ENCODE measurements at regions of chr11 and their contacts with region 1.

Region 1: GRCh38 chr11:122309262-122309925 is 193.4 kb upstream of the BLID start:
- DNase-seq: peak in 1 of 2 donors; percentile 45
- ATAC-seq: peak; percentile 63 to 97 (median 91)
- H3K4me3 ChIP-seq: peak overlapping the region in 9 of 10 donors; percentile 21 to 55 (median 47)
- H3K27ac ChIP-seq: peak overlapping the region in 9 of 10 donors; percentile 46 to 86 (median 73)
- H3K4me1 ChIP-seq: peaks cover 0 to 38% (median 7%) of the 10 kb centered on the region in 9 donors
- H3K27me3 ChIP-seq: no peaks in the 10 kb centered on the region
- CTCF ChIP-seq: no peak

Region 2: GRCh38 chr11:122242731-122243130 is 66.7 kb before region 1 on chr11:
- intact Hi-C with region 1: loop called in 1 of 10 experiments (anchors 10 kb)
- DNase-seq: peak in 1 of 2 donors; percentile 13
- ATAC-seq: peak in 1 of 8 donors; percentile 52
- H3K4me3 ChIP-seq: no peak overlapping the region
- H3K27ac ChIP-seq: no peak overlapping the region
- H3K4me1 ChIP-seq: peaks cover 0 to 8% (median 0%) of the 10 kb centered on the region in 9 donors
- H3K27me3 ChIP-seq: no peaks in the 10 kb centered on the region
- CTCF ChIP-seq: no peak

Region 3: DNA sequence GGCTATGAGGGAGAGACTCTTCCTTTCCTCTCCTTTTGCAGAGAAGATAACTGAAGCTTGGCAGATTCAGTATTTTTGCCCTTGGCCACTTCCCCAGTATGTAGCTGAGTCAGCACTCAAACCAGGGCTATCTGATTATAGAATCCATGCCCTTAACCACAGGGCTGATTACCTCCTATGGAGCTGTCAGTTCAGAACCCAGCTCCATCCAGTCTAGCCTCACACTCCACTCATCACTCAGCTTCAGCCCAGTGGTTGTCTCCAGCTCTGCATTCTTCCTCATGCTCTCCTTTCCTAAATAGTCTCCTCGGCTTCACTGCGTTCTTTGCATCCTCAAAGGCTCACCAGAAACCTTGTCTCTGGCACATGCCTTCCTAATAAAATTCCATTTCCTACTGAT is 41.8 kb before region 1 on chr11:
- intact Hi-C with region 1: no loop called
- DNase-seq: no peak
- ATAC-seq: peak in 2 of 8 donors; percentile 39 to 50
- H3K4me3 ChIP-seq: no peak overlapping the region
- H3K27ac ChIP-seq: no peak overlapping the region
- H3K4me1 ChIP-seq: peaks cover 0 to 12% (median 0%) of the 10 kb centered on the region in 9 donors
- H3K27me3 ChIP-seq: no peaks in the 10 kb centered on the region
- CTCF ChIP-seq: no peak

Region 4: GRCh38 chr11:122345586-122345985 is 36.2 kb after region 1 on chr11:
- intact Hi-C with region 1: loop called in 1 of 10 experiments (anchors 5 kb)
- DNase-seq: no peak
- ATAC-seq: no peak
- H3K4me3 ChIP-seq: no peak overlapping the region
- H3K27ac ChIP-seq: peak overlapping the region in 1 of 10 donors; percentile 14
- H3K4me1 ChIP-seq: peaks cover 3 to 37% (median 14%) of the 10 kb centered on the region in 9 donors
- H3K27me3 ChIP-seq: no peaks in the 10 kb centered on the region
- CTCF ChIP-seq: no peak

Region 5: GRCh38 chr11:122367809-122368231 is 58.4 kb after region 1 on chr11:
- intact Hi-C with region 1: loop called in 1 of 10 experiments (anchors 5 kb)
- DNase-seq: peak in 1 of 2 donors; percentile 46
- ATAC-seq: peak; percentile 61 to 94 (median 90)
- H3K4me3 ChIP-seq: peak overlapping the region in 6 of 10 donors; percentile 2 to 39 (median 12)
- H3K27ac ChIP-seq: peak overlapping the region in 8 of 10 donors; percentile 11 to 80 (median 48)
- H3K4me1 ChIP-seq: peaks cover 0 to 34% (median 24%) of the 10 kb centered on the region in 9 donors
- H3K27me3 ChIP-seq: no peaks in the 10 kb centered on the region
- CTCF ChIP-seq: no peak

Region 6: GRCh38 chr11:122491509-122491908 is 182.1 kb after region 1 on chr11:
- intact Hi-C with region 1: no loop called
- DNase-seq: peak in 1 of 2 donors; percentile 37
- ATAC-seq: peak in 7 of 8 donors; percentile 79 to 98 (median 92)
- H3K4me3 ChIP-seq: no peak overlapping the region
- H3K27ac ChIP-seq: peak overlapping the region in 8 of 10 donors; percentile 5 to 83 (median 33)
- H3K4me1 ChIP-seq: peaks cover 0 to 28% (median 14%) of the 10 kb centered on the region in 9 donors
- H3K27me3 ChIP-seq: no peaks in the 10 kb centered on the region
- CTCF ChIP-seq: no peak

Measured in heart right ventricle (tissue), 16 donors.